Calu3 (cell line): ENCODE measurements at regions of chr5 and their contacts with region 1.

Region 1: GRCh38 chr5:11851406-11851805 is 52.8 kb downstream of the CTNND2 start:
- DNase-seq: peak; percentile 39
- H3K4me3 Mint-ChIP-seq: no peak overlapping the region
- H3K27ac Mint-ChIP-seq: no peak overlapping the region
- H3K4me1 Mint-ChIP-seq: peaks cover 5% of the 10 kb centered on the region
- H3K27me3 Mint-ChIP-seq: no peaks in the 10 kb centered on the region
- CTCF ChIP-seq: no peak

Region 2: DNA sequence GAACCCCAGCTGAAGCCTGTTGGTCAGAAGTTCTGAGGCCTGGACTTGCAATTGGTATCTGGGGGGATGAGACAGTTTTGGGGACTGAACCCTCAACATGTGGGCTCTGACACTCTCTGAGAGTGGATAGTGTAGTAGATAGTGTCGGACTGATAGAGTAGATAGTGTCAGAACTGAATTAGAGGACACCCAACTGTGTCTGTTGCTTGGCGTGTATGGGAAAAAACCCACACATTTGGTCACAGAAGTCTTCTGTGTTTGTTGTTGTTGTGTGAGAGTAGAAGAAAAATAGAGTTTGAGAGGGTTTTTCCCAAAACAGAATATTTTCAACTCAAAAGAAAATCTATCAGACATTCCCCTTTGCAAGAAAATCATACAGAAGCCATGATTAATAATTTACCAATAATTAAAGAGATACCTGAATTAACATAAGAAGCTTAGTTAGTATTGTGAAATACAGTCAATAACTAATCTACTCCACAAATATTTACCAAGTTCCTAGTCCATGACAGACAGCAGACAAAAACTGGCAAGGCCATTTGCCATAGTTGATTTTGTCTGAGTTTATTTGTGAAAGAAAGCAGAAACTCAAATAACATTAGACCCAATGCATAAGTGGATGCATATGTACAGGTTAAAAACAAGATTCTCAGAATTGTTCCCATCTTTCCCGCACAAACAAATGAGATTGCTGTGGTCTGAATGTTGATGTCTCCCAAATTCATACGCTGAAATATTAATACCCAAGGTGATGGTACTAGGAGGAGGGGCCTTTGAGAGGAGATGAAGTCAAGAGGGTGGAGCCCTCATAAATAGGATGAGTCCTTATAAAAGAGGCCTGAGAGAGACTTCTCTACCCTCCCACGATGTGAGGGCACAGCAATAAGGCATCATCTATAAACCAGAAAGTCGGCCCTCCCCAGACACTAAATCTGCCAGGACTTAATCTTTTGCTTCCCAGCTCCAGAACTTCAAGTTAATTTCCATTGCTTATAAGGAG is 117.9 kb before region 1 on chr5:
- CTCF ChIA-PET with region 1: no interaction called
- intact Hi-C with region 1: loop called (anchors 5 kb)
- DNase-seq: no peak
- H3K4me3 Mint-ChIP-seq: peak overlapping the region; percentile 18
- H3K27ac Mint-ChIP-seq: no peak overlapping the region
- H3K4me1 Mint-ChIP-seq: peaks cover 37% of the 10 kb centered on the region
- H3K27me3 Mint-ChIP-seq: no peaks in the 10 kb centered on the region
- CTCF ChIP-seq: no peak

Region 3: GRCh38 chr5:11760940-11761603 is 90.3 kb before region 1 on chr5:
- CTCF ChIA-PET with region 1: no interaction called
- intact Hi-C with region 1: loop called (anchors 2 kb)
- DNase-seq: peak; percentile 69
- H3K4me3 Mint-ChIP-seq: peak overlapping the region; percentile 41
- H3K27ac Mint-ChIP-seq: peak overlapping the region; percentile 72
- H3K4me1 Mint-ChIP-seq: no peaks in the 10 kb centered on the region
- H3K27me3 Mint-ChIP-seq: no peaks in the 10 kb centered on the region
- CTCF ChIP-seq: no peak

Region 4: GRCh38 chr5:11797132-11797531 is 54.3 kb before region 1 on chr5:
- CTCF ChIA-PET with region 1: no interaction called
- intact Hi-C with region 1: loop called (anchors 5 kb)
- DNase-seq: peak; percentile 55
- H3K4me3 Mint-ChIP-seq: no peak overlapping the region
- H3K27ac Mint-ChIP-seq: no peak overlapping the region
- H3K4me1 Mint-ChIP-seq: peaks cover 14% of the 10 kb centered on the region
- H3K27me3 Mint-ChIP-seq: no peaks in the 10 kb centered on the region
- CTCF ChIP-seq: no peak